ENCODE measurements at regions of chr3 and their contacts with region 1.

Region 1: GRCh38 chr3:120855665-120856437 is 52.2 kb upstream of the STXBP5L start:
- DNase-seq: peak; percentile 85
- H3K4me3 ChIP-seq: no peak overlapping the region
- H3K27ac ChIP-seq: peak overlapping the region in 1 of 4 donors; percentile 38
- H3K4me1 ChIP-seq: peaks cover 0 to 19% (median 5%) of the 10 kb centered on the region in 4 donors
- H3K27me3 ChIP-seq: no peaks in the 10 kb centered on the region
- CTCF ChIP-seq: no peak
- EP300 ChIP-seq: no peak
- POLR2A ChIP-seq: no peak

Region 2: GRCh38 chr3:120596116-120596852 is 259.6 kb before region 1 on chr3 and contains the start of gene NDUFB4:
- intact Hi-C with region 1: no loop called
- DNase-seq: peak; percentile 99
- H3K4me3 ChIP-seq: peak within 1 kb of the TSS; percentile 62 to 88 (median 76)
- H3K27ac ChIP-seq: peak within 1 kb of the TSS; percentile 89 to 94 (median 90)
- H3K4me1 ChIP-seq: peaks cover 0 to 46% (median 38%) of the 10 kb centered on the region in 4 donors
- H3K27me3 ChIP-seq: no peaks in the 10 kb centered on the region
- CTCF ChIP-seq: no peak
- EP300 ChIP-seq: peak in 1 of 4 donors; percentile 50
- POLR2A ChIP-seq: peak; percentile 78 to 86
- total RNA-seq, gene NDUFB4: 72.3 to 148 (median 113) TPM

Region 3: DNA sequence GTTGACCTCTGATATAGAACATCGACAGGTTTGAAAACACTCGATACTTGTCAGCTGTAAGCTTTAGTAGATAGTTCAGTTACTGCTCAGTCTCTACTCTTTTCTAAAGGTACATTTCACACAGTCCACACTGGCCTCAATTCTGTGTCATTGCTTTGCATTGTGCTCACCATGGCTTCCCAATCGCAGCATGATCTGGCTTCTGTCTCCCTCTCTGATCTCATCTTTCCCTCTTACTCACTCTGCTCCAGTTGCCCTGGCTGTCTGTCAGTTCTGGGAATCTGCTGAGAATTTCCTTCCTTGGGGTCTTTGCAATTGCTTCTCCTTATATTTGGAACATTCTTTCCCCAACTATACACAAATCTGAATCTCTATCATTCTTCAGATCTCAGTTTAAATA is 32.7 kb before region 1 on chr3:
- intact Hi-C with region 1: no loop called
- DNase-seq: no peak
- H3K4me3 ChIP-seq: no peak overlapping the region
- H3K27ac ChIP-seq: no peak overlapping the region
- H3K4me1 ChIP-seq: no peaks in the 10 kb centered on the region
- H3K27me3 ChIP-seq: no peaks in the 10 kb centered on the region
- CTCF ChIP-seq: no peak
- EP300 ChIP-seq: no peak
- POLR2A ChIP-seq: no peak

Region 4: DNA sequence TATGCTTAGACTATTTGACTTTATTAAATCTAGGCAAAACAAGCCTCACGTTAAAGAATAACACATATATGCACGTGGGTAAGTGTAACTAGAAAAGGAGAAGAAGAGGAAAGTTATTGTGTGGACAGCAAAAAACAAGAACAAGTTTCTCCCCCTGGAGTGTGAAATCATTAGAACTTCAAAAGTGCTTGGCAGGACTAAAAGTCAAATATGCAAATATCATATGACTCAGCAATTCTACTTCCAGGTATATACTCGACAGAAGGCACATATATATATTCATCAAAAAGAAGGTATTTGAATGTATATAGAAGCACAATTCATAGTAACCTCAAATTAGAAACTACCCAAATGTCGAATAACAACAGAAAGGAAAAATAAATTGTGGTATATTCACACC is 16.7 kb before region 1 on chr3:
- intact Hi-C with region 1: no loop called
- DNase-seq: no peak
- H3K4me3 ChIP-seq: no peak overlapping the region
- H3K27ac ChIP-seq: no peak overlapping the region
- H3K4me1 ChIP-seq: no peaks in the 10 kb centered on the region
- H3K27me3 ChIP-seq: no peaks in the 10 kb centered on the region
- CTCF ChIP-seq: no peak
- EP300 ChIP-seq: no peak
- POLR2A ChIP-seq: no peak

Region 5: DNA sequence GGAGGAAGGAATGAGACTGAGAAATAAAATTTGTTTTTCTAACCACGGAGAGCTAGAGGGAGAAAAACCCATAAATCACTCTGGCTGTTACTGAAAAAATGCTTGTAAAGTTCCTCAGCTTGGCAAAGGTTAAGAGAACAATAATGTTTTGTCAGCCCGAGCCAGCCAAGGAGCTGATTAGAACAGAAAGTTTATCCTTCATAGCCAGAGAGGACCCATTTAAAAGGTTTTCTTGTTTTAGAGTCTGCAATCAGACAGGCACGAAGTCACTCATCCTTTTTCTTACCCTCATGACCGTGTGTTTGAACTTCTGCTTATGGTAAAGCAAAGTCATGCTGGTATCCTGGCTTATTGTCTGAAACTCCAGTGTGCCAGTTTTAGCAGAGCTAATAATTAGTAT is 38.5 kb after region 1 on chr3:
- intact Hi-C with region 1: loop called (anchors 5 kb)
- DNase-seq: peak; percentile 63
- H3K4me3 ChIP-seq: no peak overlapping the region
- H3K27ac ChIP-seq: peak overlapping the region in 3 of 4 donors; percentile 69 to 72 (median 72)
- H3K4me1 ChIP-seq: peaks cover 0 to 31% (median 25%) of the 10 kb centered on the region in 4 donors
- H3K27me3 ChIP-seq: no peaks in the 10 kb centered on the region
- CTCF ChIP-seq: no peak
- EP300 ChIP-seq: no peak
- POLR2A ChIP-seq: no peak

Region 6: GRCh38 chr3:120956143-120956542 is 100.3 kb after region 1 on chr3:
- intact Hi-C with region 1: no loop called
- DNase-seq: no peak
- H3K4me3 ChIP-seq: no peak overlapping the region
- H3K27ac ChIP-seq: no peak overlapping the region
- H3K4me1 ChIP-seq: no peaks in the 10 kb centered on the region
- H3K27me3 ChIP-seq: no peaks in the 10 kb centered on the region
- CTCF ChIP-seq: no peak
- EP300 ChIP-seq: no peak
- POLR2A ChIP-seq: no peak

Measured in sigmoid colon (tissue), 7 donors.